PC-3 (cell line): ENCODE measurements at regions of chr3 and their contacts with region 1.

Region 1: GRCh38 chr3:87333393-87333892 is 57.1 kb upstream of the POU1F1 start:
- DNase-seq: peak; percentile 99
- ATAC-seq: peak; percentile 91
- H3K4me3 ChIP-seq: peak overlapping the region; percentile 38; the same call in 1 of the 2 replicates
- H3K27ac ChIP-seq: peak overlapping the region; percentile 98
- H3K4me1 ChIP-seq: peaks cover 43% of the 10 kb centered on the region
- H3K27me3 ChIP-seq: no peaks in the 10 kb centered on the region
- CTCF ChIP-seq: no peak

Region 2: DNA sequence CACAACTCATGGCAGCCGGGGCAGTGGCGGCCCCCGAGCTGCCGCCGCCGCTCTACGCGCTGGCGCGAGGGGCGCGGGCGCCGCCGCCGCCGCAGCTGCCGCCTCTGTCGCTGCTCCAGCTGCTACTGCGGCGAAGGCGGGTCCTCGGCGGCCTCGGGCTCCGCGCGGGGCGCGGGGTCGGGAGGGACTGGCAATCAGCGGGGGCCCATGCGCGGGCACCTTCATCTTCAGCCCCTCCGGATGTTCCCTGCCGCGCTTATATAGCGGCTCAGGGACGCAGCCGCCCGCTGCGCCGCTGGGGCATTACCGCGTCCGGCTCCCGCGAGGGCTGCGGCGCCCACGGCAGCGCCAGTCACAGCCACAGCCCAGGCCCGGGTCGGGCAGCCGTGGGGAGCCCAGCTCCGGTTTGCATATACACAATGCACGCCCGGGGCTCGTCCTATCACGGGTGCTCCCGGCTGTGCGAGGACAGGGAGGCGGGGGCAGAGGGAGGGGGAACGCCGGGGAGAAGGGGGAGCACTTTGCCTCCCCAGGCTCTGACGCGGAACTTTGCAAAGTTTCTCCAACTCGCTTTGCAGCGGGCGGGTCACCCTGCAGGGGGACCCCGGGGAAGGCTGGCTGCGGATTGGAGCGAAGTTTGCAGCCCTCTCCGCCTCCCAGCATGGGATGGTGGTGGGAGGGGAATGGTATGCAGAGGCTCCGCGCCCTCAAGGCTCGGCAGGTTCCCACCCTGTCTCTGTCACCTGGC is 342.5 kb before region 1 on chr3 and contains the start of gene VGLL3:
- CTCF ChIA-PET with region 1: no interaction called
- POLR2A ChIA-PET with region 1: no interaction called
- intact Hi-C with region 1: loop called (anchors 5 kb)
- DNase-seq: peak; percentile 55
- ATAC-seq: peak; percentile 70
- H3K4me3 ChIP-seq: peak within 1 kb of the TSS; percentile 85
- H3K27ac ChIP-seq: peak within 1 kb of the TSS; percentile 4; the same call in 1 of the 2 replicates
- H3K4me1 ChIP-seq: peaks cover 42% of the 10 kb centered on the region
- H3K27me3 ChIP-seq: no peaks in the 10 kb centered on the region
- CTCF ChIP-seq: 0 out of 2 replicates have a peak, but pooled peaks have one; percentile 10
- total RNA-seq, gene VGLL3: 1.3 and 1.8 TPM in 2 replicates

Region 3: DNA sequence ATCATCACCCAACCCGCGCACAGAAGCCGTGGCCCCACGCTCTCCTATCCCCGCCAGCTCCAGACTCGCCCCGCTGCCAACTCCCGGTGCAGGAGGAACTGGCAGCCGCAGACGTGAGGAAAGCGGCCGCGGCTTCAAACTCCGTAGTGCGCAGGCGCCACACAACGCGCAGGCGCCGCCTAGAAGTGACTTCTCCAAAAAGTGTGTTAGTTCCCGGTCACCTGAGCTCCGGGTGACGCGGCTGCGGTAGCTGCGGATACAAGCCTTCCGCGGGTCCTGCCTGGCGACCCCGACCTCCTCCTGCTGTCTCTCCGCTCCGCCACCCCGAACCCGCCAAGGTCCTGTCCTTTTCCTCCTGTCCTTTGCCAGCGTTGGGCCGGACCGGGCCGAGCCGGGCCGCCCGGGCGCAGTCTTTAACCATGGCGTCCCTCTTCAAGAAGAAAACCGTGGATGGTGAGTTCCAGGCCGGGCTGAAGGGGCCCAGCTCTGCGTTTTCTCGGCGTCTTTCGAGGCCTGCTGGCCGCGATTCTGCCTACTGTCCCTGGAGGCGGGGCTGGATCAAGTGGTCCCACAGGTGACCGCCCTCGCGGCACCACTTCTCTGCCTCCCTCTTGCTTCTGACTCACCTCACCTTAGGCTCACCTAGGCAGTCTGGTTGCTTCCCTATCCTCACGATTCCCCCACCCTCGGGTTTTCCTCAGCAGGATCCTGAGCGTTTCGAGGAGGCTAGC is 106.2 kb before region 1 on chr3 and contains the start of gene CHMP2B:
- CTCF ChIA-PET with region 1: no interaction called
- POLR2A ChIA-PET with region 1: no interaction called
- intact Hi-C with region 1: loop called (anchors 1 kb)
- DNase-seq: peak; percentile 96
- ATAC-seq: peak; percentile 83
- H3K4me3 ChIP-seq: peak within 1 kb of the TSS; percentile 87
- H3K27ac ChIP-seq: peak within 1 kb of the TSS; percentile 90
- H3K4me1 ChIP-seq: peaks cover 25% of the 10 kb centered on the region; the same call in 1 of the 2 replicates
- H3K27me3 ChIP-seq: no peaks in the 10 kb centered on the region
- CTCF ChIP-seq: no peak
- total RNA-seq, gene CHMP2B: 40.1 and 49.4 TPM in 2 replicates

Region 4: GRCh38 chr3:87287011-87287410 is 46.4 kb before region 1 on chr3:
- CTCF ChIA-PET with region 1: no interaction called
- POLR2A ChIA-PET with region 1: no interaction called
- intact Hi-C with region 1: loop called (anchors 2 kb)
- DNase-seq: peak; percentile 92
- ATAC-seq: peak; percentile 100
- H3K4me3 ChIP-seq: no peak overlapping the region
- H3K27ac ChIP-seq: peak overlapping the region; percentile 86
- H3K4me1 ChIP-seq: peaks cover 12% of the 10 kb centered on the region
- H3K27me3 ChIP-seq: no peaks in the 10 kb centered on the region
- CTCF ChIP-seq: no peak

Region 5: DNA sequence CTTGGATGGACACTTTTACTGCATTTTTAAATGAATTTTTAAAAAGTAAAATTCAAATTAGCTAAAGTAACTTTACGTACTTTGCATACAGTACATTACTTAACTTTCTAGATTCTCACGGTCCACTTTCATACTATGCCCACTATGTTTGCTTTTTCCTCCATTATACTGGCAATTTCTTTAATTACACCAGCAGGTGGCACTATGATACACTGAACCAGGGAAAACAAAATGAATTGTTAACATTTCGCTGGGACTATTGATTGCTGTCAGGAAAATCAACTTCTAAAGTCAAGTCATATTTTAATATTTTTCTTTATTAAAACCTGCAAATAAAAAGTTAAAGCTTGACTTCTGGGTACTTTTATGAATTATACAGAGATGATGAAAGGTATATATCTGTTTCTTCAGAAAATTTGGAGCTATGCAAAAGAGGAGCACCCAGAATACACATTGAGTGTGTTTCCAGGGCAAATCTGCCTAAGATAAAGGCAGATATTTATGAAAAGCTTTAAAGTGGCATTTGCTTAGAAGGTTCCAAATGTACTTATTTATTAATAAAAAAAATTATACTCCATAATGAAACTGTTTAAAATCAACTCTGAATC is 35.2 kb before region 1 on chr3:
- CTCF ChIA-PET with region 1: no interaction called
- POLR2A ChIA-PET with region 1: no interaction called
- intact Hi-C with region 1: loop called (anchors 1 kb)
- DNase-seq: peak; percentile 80
- ATAC-seq: peak; percentile 80
- H3K4me3 ChIP-seq: no peak overlapping the region
- H3K27ac ChIP-seq: no peak overlapping the region
- H3K4me1 ChIP-seq: no peaks in the 10 kb centered on the region
- H3K27me3 ChIP-seq: no peaks in the 10 kb centered on the region
- CTCF ChIP-seq: peak; percentile 92

Region 6: DNA sequence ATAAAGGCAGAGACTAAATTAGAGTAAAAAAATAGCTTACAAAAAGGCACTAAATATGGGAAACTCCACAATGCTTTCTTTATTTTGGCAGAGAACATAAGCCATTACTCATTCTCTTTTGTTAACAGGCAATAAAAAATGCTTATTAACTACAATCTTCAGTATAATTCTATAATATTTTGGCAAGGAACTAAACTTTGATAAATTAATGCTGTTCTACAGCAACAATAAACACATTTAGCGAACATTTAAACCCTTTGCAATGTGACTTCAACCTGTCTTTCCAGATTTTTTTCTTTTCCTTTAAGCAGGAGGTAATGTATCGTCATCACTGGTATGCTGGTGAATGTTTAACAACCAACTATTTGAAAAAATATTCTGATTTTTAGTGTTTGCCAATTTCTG is 14.8 kb before region 1 on chr3:
- CTCF ChIA-PET with region 1: no interaction called
- POLR2A ChIA-PET with region 1: interaction called, 3 read pairs
- intact Hi-C with region 1: loop called (anchors 1 kb)
- DNase-seq: peak; percentile 79
- ATAC-seq: peak; percentile 67
- H3K4me3 ChIP-seq: peak overlapping the region; percentile 26
- H3K27ac ChIP-seq: peak overlapping the region; percentile 84
- H3K4me1 ChIP-seq: peaks cover 42% of the 10 kb centered on the region
- H3K27me3 ChIP-seq: no peaks in the 10 kb centered on the region
- CTCF ChIP-seq: no peak

Region 7: GRCh38 chr3:87350364-87351199 is 17.1 kb after region 1 on chr3:
- CTCF ChIA-PET with region 1: no interaction called
- POLR2A ChIA-PET with region 1: no interaction called
- intact Hi-C with region 1: loop called (anchors 2 kb)
- DNase-seq: peak; percentile 80
- ATAC-seq: peak; percentile 91
- H3K4me3 ChIP-seq: no peak overlapping the region
- H3K27ac ChIP-seq: no peak overlapping the region
- H3K4me1 ChIP-seq: peaks cover 18% of the 10 kb centered on the region; the same call in 1 of the 2 replicates
- H3K27me3 ChIP-seq: no peaks in the 10 kb centered on the region
- CTCF ChIP-seq: peak; percentile 95